Activated T-helper 2 cell treated with anti-CD3 and anti-CD28 coated beads, Interferon-gamma antibody, Interleukin-2, Interleukin-4, amounts not matched to agents 10 μg/mL and 5 μg/mL and 100 μg/mL, durations not matched to agents 14 hours and 24 hours and 36 hours (primary cell): ENCODE measurements at regions of chr4 and their contacts with region 1.

Region 1: GRCh38 chr4:128060699-128061565 is at the start of gene LARP1B:
- DNase-seq: peak; percentile 93
- H3K4me3 Mint-ChIP-seq: peak within 1 kb of the TSS; percentile 90
- H3K27ac Mint-ChIP-seq: peak within 1 kb of the TSS; percentile 95
- H3K4me1 Mint-ChIP-seq: peaks cover 12% of the 10 kb centered on the region
- H3K27me3 Mint-ChIP-seq: no peaks in the 10 kb centered on the region
- total RNA-seq, gene LARP1B: 31.9 and 32.2 TPM in 2 replicates

Region 2: DNA sequence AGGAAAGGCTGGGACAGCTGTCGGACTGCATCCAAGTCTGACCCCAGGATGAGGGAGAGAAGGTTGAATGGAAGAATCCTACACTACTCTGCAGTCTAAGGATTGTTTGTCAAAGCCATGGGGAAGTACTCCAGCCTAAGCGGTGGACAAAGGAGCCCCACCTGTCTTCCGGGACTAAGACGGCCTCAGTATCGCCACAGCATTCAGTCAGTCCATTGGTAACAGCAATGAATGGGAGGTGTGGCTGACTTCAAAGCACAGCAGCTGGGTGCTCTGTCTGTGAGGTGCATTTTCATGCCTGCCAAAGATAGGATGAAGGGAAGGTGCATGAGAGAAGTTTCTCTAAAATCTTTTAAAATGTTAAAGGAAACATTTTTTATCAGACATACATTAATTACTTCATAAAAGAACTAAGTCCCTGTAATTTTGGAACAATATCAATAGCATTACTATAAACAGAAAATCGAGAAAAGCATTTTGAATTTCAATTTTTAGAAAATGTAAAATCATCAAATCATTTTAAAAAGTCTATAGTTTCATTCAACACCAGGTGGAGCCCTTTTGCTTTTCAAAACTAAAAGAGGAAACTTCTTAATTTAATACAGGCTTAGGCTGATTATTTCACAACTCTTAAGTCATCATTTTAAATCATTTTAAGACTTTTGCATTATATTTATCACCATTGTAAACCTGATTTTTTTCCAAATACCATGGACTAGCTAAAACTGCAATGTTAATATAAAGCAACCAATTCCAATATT is 455.8 kb before region 1 on chr4:
- intact Hi-C with region 1: loop called (anchors 10 kb)
- DNase-seq: no peak
- H3K4me3 Mint-ChIP-seq: no peak overlapping the region
- H3K27ac Mint-ChIP-seq: no peak overlapping the region
- H3K4me1 Mint-ChIP-seq: no peaks in the 10 kb centered on the region
- H3K27me3 Mint-ChIP-seq: peaks cover 3% of the 10 kb centered on the region

Region 3: DNA sequence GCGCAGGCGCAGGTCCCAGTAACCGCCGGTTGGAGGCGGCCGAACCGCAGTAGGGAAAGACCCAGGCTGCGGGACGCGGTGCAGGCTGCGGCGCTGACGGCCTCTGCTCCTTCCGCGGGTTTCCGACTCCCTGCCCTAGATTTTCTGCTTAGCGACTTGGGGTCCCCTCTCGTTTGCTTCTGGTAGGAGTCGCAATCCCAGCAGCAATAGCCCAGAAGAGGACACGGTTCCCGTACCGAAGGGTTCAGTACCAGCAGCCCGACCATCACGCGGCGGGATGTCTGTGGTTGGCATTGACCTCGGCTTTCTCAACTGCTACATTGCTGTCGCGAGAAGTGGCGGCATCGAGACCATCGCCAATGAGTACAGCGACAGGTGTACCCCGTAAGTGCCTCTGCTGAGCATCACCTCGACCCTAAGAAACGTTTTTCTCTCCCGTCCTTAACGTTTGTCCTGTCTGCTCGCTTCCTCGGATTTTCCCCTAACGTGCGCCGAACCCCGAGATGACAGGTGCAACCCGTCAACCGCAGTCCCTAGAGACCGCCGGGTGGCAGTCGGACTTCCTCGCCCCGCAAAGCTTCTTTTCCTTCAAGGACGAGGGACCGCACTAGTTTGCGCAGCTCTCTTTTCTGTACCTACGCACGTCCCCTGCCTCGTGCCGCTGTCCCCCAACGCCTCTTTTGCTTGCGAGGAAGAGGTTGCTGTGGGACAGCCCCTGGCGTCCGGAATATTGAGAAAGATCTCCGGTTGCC is 278.5 kb before region 1 on chr4 and contains the start of gene HSPA4L:
- intact Hi-C with region 1: loop called (anchors 1 kb)
- DNase-seq: peak; percentile 59
- H3K4me3 Mint-ChIP-seq: peak within 1 kb of the TSS; percentile 88
- H3K27ac Mint-ChIP-seq: peak within 1 kb of the TSS; percentile 80
- H3K4me1 Mint-ChIP-seq: peaks cover 24% of the 10 kb centered on the region
- H3K27me3 Mint-ChIP-seq: peaks cover 62% of the 10 kb centered on the region
- total RNA-seq, gene HSPA4L: 5.0 and 5.2 TPM in 2 replicates

Region 4: GRCh38 chr4:127965062-127965802 is 95.7 kb before region 1 on chr4 and contains the starts of genes ABHD18 and MFSD8:
- intact Hi-C with region 1: loop called (anchors 1 kb)
- DNase-seq: peak; percentile 100
- H3K4me3 Mint-ChIP-seq: peak within 1 kb of the TSS; percentile 95
- H3K27ac Mint-ChIP-seq: peak within 1 kb of the TSS; percentile 93
- H3K4me1 Mint-ChIP-seq: peaks cover 26% of the 10 kb centered on the region
- H3K27me3 Mint-ChIP-seq: no peaks in the 10 kb centered on the region
- total RNA-seq, gene ABHD18: 21.0 and 23.9 TPM in 2 replicates
- total RNA-seq, gene MFSD8: 18.7 and 20.2 TPM in 2 replicates

Region 5: DNA sequence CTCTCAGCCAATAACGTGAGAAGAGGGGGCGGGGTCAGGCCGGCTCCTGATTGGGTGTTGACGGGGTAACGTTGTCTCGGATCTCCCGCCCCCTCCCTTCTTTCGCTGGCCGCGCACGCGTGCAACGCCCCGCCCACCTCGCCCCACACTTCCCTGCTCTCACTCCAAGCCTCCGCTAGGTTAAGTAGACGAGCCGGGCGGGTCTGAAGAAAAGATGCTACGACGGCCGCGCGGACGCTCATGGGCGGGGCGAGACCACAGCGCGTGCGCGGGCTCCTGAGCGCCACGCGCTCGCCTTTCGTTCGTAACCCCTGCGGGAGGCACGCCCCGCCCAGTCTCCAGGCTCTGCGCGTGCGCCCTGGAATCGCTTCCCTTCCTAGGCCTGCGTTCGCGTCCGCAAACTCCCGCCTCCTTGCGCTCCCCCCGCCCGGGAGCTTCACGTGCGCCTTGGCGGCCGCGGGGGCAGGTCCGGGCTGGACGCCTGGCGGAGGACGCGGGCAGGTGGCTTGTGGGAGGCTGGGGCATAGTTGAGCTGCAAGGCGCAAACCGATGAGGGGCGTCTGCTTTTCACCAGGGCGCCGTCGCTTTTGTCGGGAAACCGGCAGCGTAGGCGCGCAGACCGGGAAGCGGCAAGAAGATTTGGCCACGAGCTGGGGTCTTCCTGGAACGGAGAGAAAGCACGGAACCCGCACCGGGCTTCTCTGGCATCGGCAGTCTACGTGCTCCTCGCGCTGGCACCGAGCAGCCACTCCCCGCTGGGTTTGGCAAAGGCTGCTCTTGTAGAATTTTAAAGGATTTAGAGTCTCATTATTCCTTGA is 227.1 kb after region 1 on chr4:
- intact Hi-C with region 1: loop called (anchors 1 kb)
- DNase-seq: peak; percentile 97
- H3K4me3 Mint-ChIP-seq: peak overlapping the region; percentile 95
- H3K27ac Mint-ChIP-seq: peak overlapping the region; percentile 91
- H3K4me1 Mint-ChIP-seq: peaks cover 29% of the 10 kb centered on the region
- H3K27me3 Mint-ChIP-seq: no peaks in the 10 kb centered on the region

Region 6: GRCh38 chr4:129093191-129093920 is 1032.4 kb after region 1 on chr4 and contains the start of gene SCLT1:
- intact Hi-C with region 1: loop called (anchors 2 kb)
- DNase-seq: peak; percentile 95
- H3K4me3 Mint-ChIP-seq: peak within 1 kb of the TSS; percentile 37
- H3K27ac Mint-ChIP-seq: peak within 1 kb of the TSS; percentile 20
- H3K4me1 Mint-ChIP-seq: peaks cover 45% of the 10 kb centered on the region
- H3K27me3 Mint-ChIP-seq: no peaks in the 10 kb centered on the region
- total RNA-seq, gene SCLT1: 23.7 and 24.1 TPM in 2 replicates